Activated B cell treated with CpG ODN at 0.5 μM for 24 hours (primary cell): ENCODE measurements at regions of chr4 and their contacts with region 1.

Region 1: DNA sequence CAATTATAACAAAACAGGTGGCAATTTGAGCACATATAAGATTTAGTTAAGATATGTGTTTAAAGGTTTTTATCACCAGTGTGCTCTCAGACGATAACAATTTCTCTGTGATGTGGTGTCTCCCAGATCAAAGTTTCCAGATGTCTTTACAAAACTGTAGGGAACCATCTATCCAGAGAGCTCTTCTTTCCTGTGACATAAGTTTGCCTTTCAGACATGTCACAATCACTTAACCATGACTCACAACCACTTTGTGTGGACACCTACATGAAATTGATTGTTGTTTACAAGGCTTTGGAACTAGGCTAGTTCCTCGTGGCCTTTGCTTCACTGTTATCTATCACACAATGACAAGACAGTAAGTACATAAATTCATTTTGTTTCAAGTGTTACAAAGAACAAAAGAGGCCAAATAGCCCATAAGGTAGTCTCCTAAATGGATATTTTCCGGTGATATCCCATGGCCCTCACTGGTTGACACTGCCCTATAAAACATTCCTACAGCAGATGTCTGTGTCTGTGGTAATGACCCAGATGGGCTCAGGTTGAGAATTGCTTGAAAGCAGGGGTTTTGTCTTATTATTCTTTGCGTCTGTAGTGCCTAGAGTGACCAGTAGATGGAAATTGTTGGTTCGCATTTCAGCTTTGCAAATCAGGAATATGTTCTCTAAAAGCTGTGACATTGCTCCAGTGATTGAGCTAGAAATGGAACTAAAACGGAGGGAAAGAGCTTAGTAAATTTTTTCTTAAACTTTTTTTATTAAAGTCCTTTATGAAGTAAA is 297.8 kb upstream of the FAM241A start:
- DNase-seq: no peak
- ATAC-seq: no peak
- H3K4me3 Mint-ChIP-seq: no peak overlapping the region
- H3K27ac Mint-ChIP-seq: no peak overlapping the region
- H3K4me1 Mint-ChIP-seq: no peaks in the 10 kb centered on the region
- H3K27me3 Mint-ChIP-seq: no peaks in the 10 kb centered on the region
- CTCF ChIP-seq: no peak

Region 2: GRCh38 chr4:111937368-111937767 is 89.9 kb after region 1 on chr4:
- CTCF ChIA-PET with region 1: no interaction called
- POLR2A ChIA-PET with region 1: no interaction called
- intact Hi-C with region 1: loop called (anchors 5 kb)
- DNase-seq: no peak
- ATAC-seq: peak; percentile 40
- H3K4me3 Mint-ChIP-seq: no peak overlapping the region
- H3K27ac Mint-ChIP-seq: no peak overlapping the region
- H3K4me1 Mint-ChIP-seq: no peaks in the 10 kb centered on the region
- H3K27me3 Mint-ChIP-seq: peaks cover 4% of the 10 kb centered on the region
- CTCF ChIP-seq: peak; percentile 21